H1 (cell line): ENCODE measurements at regions of chr7 and their contacts with region 1.

Region 1: DNA sequence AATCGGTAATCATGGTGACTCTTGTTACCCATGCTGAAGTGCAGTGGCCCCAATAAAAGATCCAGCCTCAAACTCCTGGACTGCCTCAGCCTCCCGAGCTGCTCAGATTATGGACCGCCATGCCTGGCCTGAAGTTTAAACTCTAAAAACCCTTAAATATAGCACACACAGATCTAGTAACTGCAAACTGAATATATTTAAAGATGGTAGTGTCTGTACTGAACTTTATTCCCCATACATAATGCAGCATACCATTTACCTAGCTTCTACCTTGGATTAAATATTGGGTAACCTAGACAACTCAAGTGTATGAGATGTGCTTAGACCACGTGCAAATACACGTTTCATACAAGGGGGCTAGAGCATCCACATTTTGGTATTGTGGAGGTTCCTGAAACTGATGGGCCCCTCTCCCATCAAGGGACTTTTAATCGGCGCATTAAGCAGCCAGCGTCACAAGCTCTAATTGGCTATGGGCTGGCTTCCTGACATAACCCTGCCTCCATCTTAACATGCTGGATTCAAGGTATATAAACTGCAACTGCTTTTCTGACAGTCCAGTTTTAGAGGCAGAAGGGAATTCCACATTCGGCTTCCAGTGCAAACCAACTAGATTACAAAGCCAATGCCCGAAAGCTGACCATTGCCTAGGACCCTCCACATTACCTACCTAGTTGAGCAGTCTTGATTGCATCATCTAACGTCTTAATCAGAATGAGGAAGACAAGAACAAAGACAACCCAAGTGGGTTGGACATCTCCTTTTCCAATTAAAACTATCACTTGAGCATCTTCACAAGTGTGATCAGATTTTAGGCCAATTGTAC is 13.0 kb downstream of the HNRNPA2B1 start:
- DNase-seq: no peak
- H3K4me3 ChIP-seq: no peak overlapping the region
- H3K27ac ChIP-seq: peak overlapping the region; percentile 13
- H3K4me1 ChIP-seq: no peaks in the 10 kb centered on the region
- H3K27me3 ChIP-seq: no peaks in the 10 kb centered on the region
- CTCF ChIP-seq: no peak
- EP300 ChIP-seq: no peak
- POLR2A ChIP-seq: peak; percentile 89 to 92
- RAD21 ChIP-seq: no peak

Region 2: DNA sequence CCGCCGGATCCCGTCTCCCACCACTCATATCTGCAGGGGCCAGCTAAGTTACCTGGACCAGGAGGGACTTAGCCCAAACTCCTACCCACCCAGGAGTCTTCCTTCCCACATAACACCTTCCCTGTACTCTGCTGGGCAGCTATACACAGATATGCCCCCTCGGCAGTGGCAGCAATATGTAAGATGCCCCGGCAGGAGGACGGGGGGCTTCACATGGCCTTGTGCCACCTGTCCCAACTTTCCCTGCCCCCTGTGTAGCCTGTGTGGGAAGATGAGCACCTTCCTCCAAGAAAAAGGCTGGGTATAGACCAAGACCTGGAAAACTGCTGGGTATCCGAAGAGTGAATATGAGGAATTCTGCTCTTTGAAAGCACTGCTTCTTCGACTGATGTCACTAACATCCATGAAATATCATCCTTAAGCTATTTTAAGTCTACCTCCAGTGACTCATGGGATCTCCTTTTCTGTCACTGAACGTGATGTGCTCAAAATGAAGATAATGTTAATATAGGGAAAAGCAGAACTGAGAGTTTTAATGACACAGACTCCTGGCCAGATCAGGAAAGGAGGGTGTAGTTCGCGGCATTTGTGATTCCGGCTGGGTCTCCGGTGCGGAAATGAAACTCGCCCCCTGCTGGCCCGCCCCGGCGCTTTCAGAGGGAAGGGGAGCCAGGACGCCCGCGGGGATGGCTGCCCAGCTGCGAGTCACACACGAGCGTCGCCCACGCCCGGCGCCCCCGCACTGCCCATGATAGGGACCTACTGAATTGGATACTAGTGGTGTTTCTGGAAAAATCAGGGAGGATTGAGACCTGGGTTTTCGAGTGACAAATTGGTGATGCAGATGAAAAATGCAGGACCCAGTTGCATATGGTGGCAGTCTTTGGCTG is 292.4 kb before region 1 on chr7:
- CTCF ChIA-PET with region 1: interaction called, 21 read pairs
- POLR2A ChIA-PET with region 1: interaction called, 19 read pairs
- DNase-seq: peak in 1 of 2 experiments; percentile 87
- H3K4me3 ChIP-seq: peak overlapping the region; percentile 54 to 76 (median 62)
- H3K27ac ChIP-seq: no peak overlapping the region
- H3K4me1 ChIP-seq: peaks cover 0 to 7% (median 2%) of the 10 kb centered on the region in 4 experiments; a peak in 3 of 7 replicates
- H3K27me3 ChIP-seq: no peaks in the 10 kb centered on the region
- CTCF ChIP-seq: peak; percentile 50 to 65 (median 53)
- EP300 ChIP-seq: no peak
- POLR2A ChIP-seq: no peak
- RAD21 ChIP-seq: peak; percentile 15 to 43; a peak in 2 of 4 replicates

Region 3: GRCh38 chr7:26090927-26091519 is 96.6 kb before region 1 on chr7:
- CTCF ChIA-PET with region 1: interaction called, 46 read pairs
- POLR2A ChIA-PET with region 1: interaction called, 230 read pairs
- DNase-seq: no peak
- H3K4me3 ChIP-seq: peak overlapping the region in 1 of 4 experiments; percentile 19; a peak in 1 of 8 replicates
- H3K27ac ChIP-seq: no peak overlapping the region
- H3K4me1 ChIP-seq: peaks cover 0 to 3% (median 3%) of the 10 kb centered on the region in 4 experiments; a peak in 3 of 7 replicates
- H3K27me3 ChIP-seq: no peaks in the 10 kb centered on the region
- CTCF ChIP-seq: peak in 2 of 3 experiments; percentile 63 to 76; a peak in 3 of 4 replicates
- EP300 ChIP-seq: no peak
- POLR2A ChIP-seq: no peak
- RAD21 ChIP-seq: peak; percentile 84 to 87

Region 4: GRCh38 chr7:26127411-26127810 is 60.2 kb before region 1 on chr7:
- CTCF ChIA-PET with region 1: no interaction called
- POLR2A ChIA-PET with region 1: interaction called, 10 read pairs
- DNase-seq: no peak
- H3K4me3 ChIP-seq: no peak overlapping the region
- H3K27ac ChIP-seq: no peak overlapping the region
- H3K4me1 ChIP-seq: no peaks in the 10 kb centered on the region
- H3K27me3 ChIP-seq: no peaks in the 10 kb centered on the region; a peak in 1 of 7 replicates
- CTCF ChIP-seq: no peak
- EP300 ChIP-seq: no peak
- POLR2A ChIP-seq: no peak
- RAD21 ChIP-seq: no peak

Region 5: GRCh38 chr7:26143298-26144048 is 44.1 kb before region 1 on chr7:
- CTCF ChIA-PET with region 1: no interaction called
- POLR2A ChIA-PET with region 1: interaction called, 36 read pairs
- DNase-seq: no peak
- H3K4me3 ChIP-seq: no peak overlapping the region
- H3K27ac ChIP-seq: no peak overlapping the region
- H3K4me1 ChIP-seq: no peaks in the 10 kb centered on the region
- H3K27me3 ChIP-seq: no peaks in the 10 kb centered on the region
- CTCF ChIP-seq: no peak
- EP300 ChIP-seq: no peak
- POLR2A ChIP-seq: no peak
- RAD21 ChIP-seq: no peak

Region 6: GRCh38 chr7:26167301-26167934 is 20.2 kb before region 1 on chr7:
- CTCF ChIA-PET with region 1: interaction called, 3 read pairs
- POLR2A ChIA-PET with region 1: interaction called, 16 read pairs
- DNase-seq: no peak
- H3K4me3 ChIP-seq: no peak overlapping the region
- H3K27ac ChIP-seq: no peak overlapping the region
- H3K4me1 ChIP-seq: peaks cover 5 to 16% (median 10%) of the 10 kb centered on the region in 4 experiments; a peak in 6 of 7 replicates
- H3K27me3 ChIP-seq: no peaks in the 10 kb centered on the region
- CTCF ChIP-seq: no peak
- EP300 ChIP-seq: no peak
- POLR2A ChIP-seq: no peak
- RAD21 ChIP-seq: no peak

Region 7: DNA sequence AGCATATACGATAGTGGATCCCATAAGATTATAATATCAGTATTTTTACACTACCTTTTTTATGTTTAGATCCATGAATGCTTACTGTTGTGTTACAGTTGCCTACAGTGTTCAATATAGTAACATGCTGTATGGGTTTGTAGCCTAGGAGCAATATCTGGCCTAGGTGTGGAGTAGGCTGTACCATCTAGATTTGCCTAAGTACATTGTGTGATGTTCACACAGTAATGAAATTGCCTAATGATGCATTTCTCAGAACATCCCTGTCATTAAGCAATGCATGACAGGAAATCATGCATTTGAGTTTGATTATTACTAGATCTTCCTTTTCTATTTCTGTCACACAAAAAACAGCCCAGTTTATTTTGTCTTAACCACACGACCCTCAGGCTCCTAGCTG is 28.5 kb after region 1 on chr7:
- CTCF ChIA-PET with region 1: no interaction called
- POLR2A ChIA-PET with region 1: interaction called, 442 read pairs
- DNase-seq: no peak
- H3K4me3 ChIP-seq: no peak overlapping the region
- H3K27ac ChIP-seq: no peak overlapping the region
- H3K4me1 ChIP-seq: no peaks in the 10 kb centered on the region
- H3K27me3 ChIP-seq: no peaks in the 10 kb centered on the region
- CTCF ChIP-seq: no peak
- EP300 ChIP-seq: no peak
- POLR2A ChIP-seq: no peak
- RAD21 ChIP-seq: no peak

Region 8: DNA sequence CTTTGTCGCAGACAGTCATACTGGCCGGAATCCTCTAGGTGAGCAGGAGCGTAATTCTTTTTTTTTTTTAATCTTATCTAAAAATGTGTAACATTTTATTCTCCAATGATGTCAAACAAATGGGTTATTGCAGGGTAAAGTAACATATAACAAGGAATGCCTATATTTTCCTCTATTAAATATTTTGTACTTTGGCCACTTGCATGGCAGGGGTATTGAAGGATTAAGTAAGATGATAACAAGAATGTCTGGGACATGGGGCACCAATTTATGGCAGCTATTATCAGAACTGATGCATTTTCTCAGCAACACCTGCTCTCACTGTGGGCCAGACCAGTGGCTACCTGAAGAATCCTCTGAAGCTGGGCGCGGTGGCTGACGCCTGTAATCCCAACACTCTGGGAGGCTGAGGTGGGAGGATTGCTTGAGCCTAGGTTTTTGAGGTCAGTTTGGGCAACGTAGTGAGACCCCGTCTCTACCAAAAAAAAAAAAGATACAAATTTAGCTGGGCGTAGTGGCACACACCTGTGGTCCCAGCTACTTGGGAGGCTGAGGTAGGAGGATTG is 80.1 kb after region 1 on chr7:
- CTCF ChIA-PET with region 1: no interaction called
- POLR2A ChIA-PET with region 1: no interaction called
- DNase-seq: no peak
- H3K4me3 ChIP-seq: no peak overlapping the region
- H3K27ac ChIP-seq: no peak overlapping the region
- H3K4me1 ChIP-seq: no peaks in the 10 kb centered on the region
- H3K27me3 ChIP-seq: no peaks in the 10 kb centered on the region
- CTCF ChIP-seq: no peak
- EP300 ChIP-seq: no peak
- POLR2A ChIP-seq: no peak
- RAD21 ChIP-seq: no peak

Region 9: DNA sequence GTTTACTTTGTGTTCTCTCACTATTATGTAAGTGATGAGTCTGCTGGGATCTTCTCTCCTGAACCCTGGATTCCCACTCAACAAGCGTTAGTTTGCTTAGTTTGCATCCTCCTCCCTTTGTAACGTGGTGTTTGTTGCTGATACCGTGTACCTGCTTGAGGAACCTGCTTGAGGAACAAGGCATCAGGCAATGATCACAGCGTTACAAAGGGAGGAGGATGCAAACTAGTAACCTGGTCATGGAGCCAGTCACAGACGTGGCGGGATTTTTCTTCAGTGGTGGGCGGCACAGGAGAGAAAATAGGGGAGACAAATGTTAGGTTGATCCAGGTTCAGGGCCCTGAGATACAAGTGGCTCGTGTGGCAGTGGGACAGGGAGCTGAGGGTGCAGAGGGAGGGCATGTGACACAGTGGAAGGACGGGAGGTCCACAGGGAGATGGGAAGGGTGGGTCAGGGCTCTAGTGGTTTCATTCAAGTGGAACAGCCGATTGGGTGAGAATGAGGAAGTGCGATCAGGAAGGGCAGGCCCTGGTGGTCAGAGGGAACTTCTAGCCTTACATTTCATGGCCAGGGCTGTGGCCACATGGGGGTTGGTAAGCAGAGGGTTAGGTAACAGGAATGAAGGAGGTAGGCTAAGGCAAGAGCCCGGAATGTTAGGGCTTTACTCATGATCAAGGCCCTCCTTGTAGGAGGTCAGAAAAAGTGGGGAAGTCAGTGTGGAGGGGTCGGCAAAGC is 142.1 kb after region 1 on chr7:
- CTCF ChIA-PET with region 1: no interaction called
- POLR2A ChIA-PET with region 1: no interaction called
- DNase-seq: no peak
- H3K4me3 ChIP-seq: no peak overlapping the region
- H3K27ac ChIP-seq: no peak overlapping the region
- H3K4me1 ChIP-seq: no peaks in the 10 kb centered on the region
- H3K27me3 ChIP-seq: no peaks in the 10 kb centered on the region
- CTCF ChIP-seq: no peak
- EP300 ChIP-seq: no peak
- POLR2A ChIP-seq: no peak
- RAD21 ChIP-seq: no peak